GM10248 (cell line): ENCODE measurements at regions of chr14 and their contacts with region 1.

Region 1: GRCh38 chr14:22556990-22557623 is 31.9 kb downstream of the DAD1 start:
- DNase-seq: peak; percentile 77
- CTCF ChIP-seq: peak; percentile 92

Region 2: GRCh38 chr14:22319526-22320361 is 237.4 kb before region 1 on chr14:
- CTCF ChIA-PET with region 1: interaction called, 10 read pairs
- POLR2A ChIA-PET with region 1: no interaction called
- DNase-seq: peak; percentile 52
- CTCF ChIP-seq: peak; percentile 79

Region 3: DNA sequence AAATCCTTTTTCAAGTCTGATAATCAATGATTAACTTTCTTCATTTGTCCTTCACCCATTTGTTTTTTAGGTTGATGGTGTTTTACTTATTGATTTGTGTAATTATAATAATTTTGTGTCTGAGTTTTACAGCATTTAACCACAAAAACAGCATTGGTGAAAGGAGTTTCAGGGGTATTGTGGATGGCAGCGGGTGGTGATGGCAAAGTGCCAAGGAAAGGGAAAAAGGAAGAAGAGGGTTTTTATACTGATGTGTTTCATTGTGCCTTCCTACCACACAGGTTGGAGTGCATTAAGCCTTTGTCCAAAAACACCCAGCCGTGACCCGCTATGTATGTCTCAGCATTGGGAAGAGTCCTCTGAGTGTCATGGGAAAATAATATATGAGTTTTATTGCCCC is 118.4 kb before region 1 on chr14:
- CTCF ChIA-PET with region 1: no interaction called
- POLR2A ChIA-PET with region 1: no interaction called
- DNase-seq: no peak
- CTCF ChIP-seq: no peak

Region 4: GRCh38 chr14:22491683-22492621 is 65.2 kb before region 1 on chr14:
- CTCF ChIA-PET with region 1: interaction called, 17 read pairs
- POLR2A ChIA-PET with region 1: interaction called, 8 read pairs
- DNase-seq: peak; percentile 39
- CTCF ChIP-seq: no peak

Region 5: DNA sequence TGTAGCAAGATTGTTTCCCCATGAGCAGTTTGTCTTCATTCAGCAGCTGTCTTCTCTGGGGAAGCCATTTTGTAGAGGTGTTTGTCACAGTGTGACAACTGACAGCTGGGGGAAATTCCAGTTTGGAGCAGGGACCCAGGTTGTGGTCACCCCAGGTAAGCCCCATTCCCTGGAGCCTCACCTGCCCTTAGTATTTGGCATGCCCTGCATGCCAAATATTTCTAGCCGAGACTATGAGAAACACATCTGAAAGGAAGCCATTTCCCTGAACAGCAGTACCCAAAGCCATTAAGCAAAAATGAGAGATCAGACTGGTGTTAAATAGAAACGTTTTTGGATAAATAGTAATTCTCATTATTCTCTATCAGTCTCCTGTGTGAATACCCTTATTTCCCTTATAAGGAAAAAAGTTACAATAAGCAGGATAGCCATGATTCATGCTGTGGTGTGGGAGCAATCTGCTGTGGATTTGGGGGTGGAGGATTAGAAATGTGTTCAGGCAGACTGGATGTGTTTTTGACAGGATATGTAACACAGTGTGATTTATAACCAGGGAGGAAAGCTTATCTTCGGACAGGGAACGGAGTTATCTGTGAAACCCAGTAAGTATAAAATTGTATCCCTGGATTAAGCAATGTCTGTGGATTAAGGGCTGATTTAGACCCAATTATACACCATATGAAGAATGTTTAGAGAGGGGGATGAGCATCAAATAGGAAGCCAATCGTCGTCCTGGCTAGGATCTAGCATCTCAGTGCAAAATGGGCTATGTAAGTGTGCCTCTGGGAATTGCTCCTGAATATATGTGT is 37.0 kb before region 1 on chr14:
- CTCF ChIA-PET with region 1: interaction called, 12 read pairs
- POLR2A ChIA-PET with region 1: no interaction called
- DNase-seq: no peak
- CTCF ChIP-seq: no peak

Region 6: GRCh38 chr14:22583994-22584393 is 26.9 kb after region 1 on chr14:
- CTCF ChIA-PET with region 1: interaction called, 19 read pairs
- POLR2A ChIA-PET with region 1: interaction called, 3 read pairs
- DNase-seq: no peak
- CTCF ChIP-seq: no peak

Region 7: DNA sequence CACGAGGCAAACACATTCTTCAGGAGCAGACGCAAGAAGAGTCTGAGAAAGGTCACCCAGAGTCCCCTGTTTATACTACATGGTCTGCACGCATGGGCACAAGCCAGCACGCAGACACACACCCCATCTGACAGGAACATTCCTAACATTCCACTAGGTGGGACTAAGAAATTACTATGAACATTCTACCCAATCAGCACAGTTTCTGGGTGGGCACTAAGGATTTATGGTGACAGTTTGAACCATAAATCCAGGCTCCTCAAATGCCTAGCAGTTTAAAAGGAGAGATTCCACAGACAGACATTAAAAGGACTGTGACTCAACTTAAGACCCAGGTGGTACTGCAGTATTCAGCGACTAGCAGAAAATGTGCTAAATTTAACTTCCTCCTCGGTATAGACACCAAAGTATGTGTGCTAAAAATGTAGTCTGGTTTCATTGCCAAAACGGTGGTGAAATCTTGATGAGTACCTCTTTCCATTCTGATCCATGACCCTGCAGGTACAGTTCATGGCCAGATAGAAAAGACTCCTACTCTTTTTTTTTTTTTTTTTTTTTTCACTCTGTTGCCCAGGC is 57.2 kb after region 1 on chr14:
- CTCF ChIA-PET with region 1: no interaction called
- POLR2A ChIA-PET with region 1: no interaction called
- DNase-seq: no peak
- CTCF ChIP-seq: no peak

Region 8: GRCh38 chr14:22630486-22630885 is 73.4 kb after region 1 on chr14:
- CTCF ChIA-PET with region 1: no interaction called
- POLR2A ChIA-PET with region 1: no interaction called
- DNase-seq: no peak
- CTCF ChIP-seq: no peak

Region 9: DNA sequence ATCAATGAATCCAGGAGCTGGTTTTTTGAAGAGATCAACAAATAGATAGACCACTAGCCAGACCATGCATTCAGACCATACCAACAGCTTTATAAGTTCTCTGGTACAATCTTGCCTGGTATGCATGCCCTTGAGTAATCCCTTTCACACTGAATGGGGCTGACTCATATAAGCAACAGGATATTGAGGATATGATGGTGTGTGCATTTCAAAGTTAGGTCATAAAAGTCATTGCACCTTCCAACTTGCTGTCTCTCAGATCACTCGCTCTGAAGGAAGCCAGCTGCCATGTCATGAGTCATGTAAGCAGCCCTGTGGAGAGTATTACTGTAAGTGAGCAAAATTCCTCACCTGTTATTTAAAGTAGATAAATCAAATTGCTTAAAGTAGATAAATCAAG is 132.1 kb after region 1 on chr14:
- CTCF ChIA-PET with region 1: no interaction called
- POLR2A ChIA-PET with region 1: no interaction called
- DNase-seq: no peak
- CTCF ChIP-seq: no peak

Region 10: DNA sequence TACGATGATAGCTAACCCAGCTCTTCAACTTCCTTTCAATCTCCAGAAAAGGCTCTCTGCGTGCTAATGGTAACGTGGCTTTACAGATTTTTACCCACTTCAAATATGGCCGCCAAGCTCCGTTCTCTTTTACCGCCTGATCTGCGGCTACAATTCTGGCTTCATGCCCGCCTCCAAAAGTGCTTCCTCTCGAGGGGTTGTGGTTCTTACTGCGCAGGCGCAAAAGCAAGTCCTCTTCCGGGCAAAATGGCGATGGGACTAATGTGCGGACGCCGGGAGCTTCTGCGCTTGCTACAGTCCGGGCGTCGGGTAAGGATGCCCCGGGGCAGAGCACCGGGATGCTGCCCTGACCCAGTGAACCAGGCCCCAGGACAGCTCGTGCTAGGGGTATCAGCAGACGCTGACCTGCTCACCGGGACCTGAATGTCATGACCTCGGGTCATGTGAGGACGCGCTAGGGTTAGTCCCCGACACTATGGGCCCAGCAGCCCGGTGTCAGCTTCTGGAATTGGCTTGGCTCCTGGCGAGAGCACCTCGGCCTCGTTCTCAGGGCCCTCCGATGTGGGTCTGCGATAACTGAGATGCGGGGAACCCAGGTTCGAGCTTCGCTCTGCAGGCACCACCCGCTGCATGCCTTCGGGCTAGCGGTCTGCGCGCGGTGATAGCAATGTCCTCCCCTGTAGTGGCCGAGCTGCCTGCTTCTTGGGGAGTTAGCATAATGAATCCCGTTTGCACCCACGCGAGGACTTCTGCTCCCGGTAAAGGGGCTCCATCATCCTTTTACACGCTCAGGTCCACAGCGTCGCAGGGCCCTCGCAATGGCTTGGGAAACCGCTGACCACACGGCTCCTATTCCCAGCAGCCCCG is 209.6 kb after region 1 on chr14 and contains the start of gene OXA1L:
- CTCF ChIA-PET with region 1: interaction called, 11 read pairs
- POLR2A ChIA-PET with region 1: no interaction called
- DNase-seq: peak; percentile 91
- CTCF ChIP-seq: no peak